GM12878 (cell line): ENCODE measurements at regions of chr2 and their contacts with region 1.

Region 1: GRCh38 chr2:227862227-227862740 is 9.1 kb upstream of the DAW1 start:
- DNase-seq: no peak
- ATAC-seq: peak; percentile 63
- H3K4me3 ChIP-seq: no peak overlapping the region
- H3K27ac ChIP-seq: no peak overlapping the region
- H3K4me1 ChIP-seq: no peaks in the 10 kb centered on the region
- H3K27me3 ChIP-seq: no peaks in the 10 kb centered on the region; a peak in 1 of 4 replicates
- CTCF ChIP-seq: peak; percentile 55 to 70 (median 66)
- EP300 ChIP-seq: no peak
- POLR2A ChIP-seq: no peak
- RAD21 ChIP-seq: peak; percentile 86

Region 2: DNA sequence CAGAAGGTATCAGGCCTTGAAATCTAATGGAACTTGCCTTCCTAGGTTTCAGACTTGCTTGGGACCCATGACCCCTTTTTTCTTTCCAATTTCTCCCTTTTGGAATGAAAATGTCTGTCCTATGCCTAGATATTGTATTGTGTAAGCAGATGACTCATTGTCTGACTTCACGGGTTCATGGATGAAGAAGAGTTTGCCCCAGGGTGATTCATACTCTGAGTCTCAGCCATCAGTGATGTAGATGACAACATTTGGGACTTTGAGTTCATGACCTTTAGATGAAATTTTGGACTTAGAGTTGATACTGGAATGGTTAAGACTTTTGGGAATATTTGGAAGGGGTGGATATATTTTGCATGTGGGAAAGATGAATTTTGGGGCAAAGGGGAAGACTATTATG is 206.8 kb before region 1 on chr2:
- CTCF ChIA-PET with region 1: interaction called, 69 read pairs
- POLR2A ChIA-PET with region 1: no interaction called
- RAD21 ChIA-PET with region 1: interaction called, 48 read pairs
- SMC1A ChIA-PET with region 1: interaction called, 45 read pairs
- in situ Hi-C with region 1: no loop called
- intact Hi-C with region 1: loop called (anchors 2 kb)
- DNase-seq: no peak
- ATAC-seq: peak; percentile 53
- H3K4me3 ChIP-seq: no peak overlapping the region
- H3K27ac ChIP-seq: no peak overlapping the region
- H3K4me1 ChIP-seq: no peaks in the 10 kb centered on the region
- H3K27me3 ChIP-seq: no peaks in the 10 kb centered on the region
- CTCF ChIP-seq: no peak
- EP300 ChIP-seq: no peak
- POLR2A ChIP-seq: no peak
- RAD21 ChIP-seq: no peak

Region 3: DNA sequence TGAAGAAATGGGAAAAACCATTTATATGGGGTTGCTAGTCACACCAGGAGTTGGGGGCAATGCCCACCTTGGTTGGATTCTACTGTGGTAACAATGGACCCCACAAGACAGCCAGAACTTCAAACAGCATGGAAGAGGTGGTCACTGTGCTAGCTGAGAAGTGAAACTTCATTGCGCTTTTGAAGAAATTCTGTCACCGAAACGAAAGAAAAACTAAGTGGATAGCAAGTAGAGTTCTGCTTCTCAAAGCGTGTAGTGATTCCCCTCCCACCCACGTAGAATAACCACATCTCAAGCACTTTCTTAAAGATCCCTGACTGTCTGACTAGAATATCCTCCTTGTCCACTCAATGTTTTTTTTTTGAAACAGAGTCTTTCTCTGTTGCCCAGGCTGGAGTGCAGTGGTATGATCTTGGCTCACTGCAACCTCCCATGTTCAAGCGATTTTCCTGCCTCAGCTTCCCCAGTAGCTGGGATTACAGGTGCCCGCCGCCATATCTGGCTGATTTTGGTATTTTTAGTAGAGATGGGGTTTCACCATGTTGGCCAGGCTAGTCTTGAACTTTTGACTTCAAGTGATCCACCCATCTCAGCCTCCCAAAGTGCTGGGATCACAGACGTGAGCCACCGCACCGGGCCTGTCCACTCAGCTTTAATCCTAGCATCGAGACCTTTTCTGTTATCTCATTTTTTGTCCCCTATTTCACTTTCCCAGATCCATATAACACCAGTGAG is 78.7 kb before region 1 on chr2:
- CTCF ChIA-PET with region 1: interaction called, 58 read pairs
- POLR2A ChIA-PET with region 1: interaction called, 8 read pairs
- RAD21 ChIA-PET with region 1: interaction called, 38 read pairs
- SMC1A ChIA-PET with region 1: interaction called, 109 read pairs
- in situ Hi-C with region 1: no loop called
- intact Hi-C with region 1: loop called (anchors 2 kb)
- DNase-seq: peak; percentile 81
- ATAC-seq: peak; percentile 91
- H3K4me3 ChIP-seq: peak overlapping the region; percentile 57
- H3K27ac ChIP-seq: peak overlapping the region; percentile 75
- H3K4me1 ChIP-seq: peaks cover 20% of the 10 kb centered on the region
- H3K27me3 ChIP-seq: no peaks in the 10 kb centered on the region
- CTCF ChIP-seq: no peak
- EP300 ChIP-seq: peak in 1 of 2 experiments; percentile 71; a peak in 1 of 4 replicates
- POLR2A ChIP-seq: 0 out of 2 replicates have a peak, but pooled peaks have one; percentile 39
- RAD21 ChIP-seq: no peak

Region 4: DNA sequence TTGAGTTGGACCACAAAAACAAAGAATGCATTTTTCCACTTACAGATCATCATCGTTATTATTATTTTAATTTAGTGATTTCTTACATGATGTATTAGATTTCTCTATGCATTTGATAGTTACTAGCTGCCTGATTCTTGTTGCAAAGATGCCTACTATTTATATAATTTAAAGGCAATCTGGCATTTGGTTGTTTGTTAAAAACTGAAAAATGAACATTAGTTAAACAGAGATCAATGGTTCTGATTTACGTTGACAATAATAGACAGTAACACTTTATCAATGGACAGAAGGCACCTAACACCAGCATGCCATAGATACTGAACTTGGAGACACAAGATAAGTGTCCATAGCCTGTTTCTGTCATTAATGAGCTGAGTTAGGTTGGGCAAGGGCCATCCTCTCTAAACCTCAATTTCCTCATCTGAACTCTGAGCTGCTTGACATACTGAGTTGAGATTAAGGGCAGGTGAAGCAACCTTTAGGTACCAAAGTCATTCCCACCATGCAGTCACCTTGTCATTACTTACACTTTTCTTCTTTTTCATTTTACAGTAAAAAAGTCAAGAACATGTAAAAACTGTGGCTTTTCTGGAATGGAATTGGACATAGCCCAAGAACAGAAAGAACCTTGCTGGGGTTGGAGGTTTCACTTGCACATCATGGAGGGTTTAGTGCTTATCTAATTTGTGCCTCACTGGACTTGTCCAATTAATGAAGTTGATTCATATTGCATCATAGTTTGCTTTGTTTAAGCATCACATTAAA is 45.6 kb before region 1 on chr2:
- CTCF ChIA-PET with region 1: interaction called, 65 read pairs
- POLR2A ChIA-PET with region 1: no interaction called
- RAD21 ChIA-PET with region 1: interaction called, 4 read pairs
- SMC1A ChIA-PET with region 1: interaction called, 24 read pairs
- in situ Hi-C with region 1: no loop called
- intact Hi-C with region 1: loop called (anchors 5 kb)
- DNase-seq: no peak
- ATAC-seq: peak; percentile 23; the same call in 2 of the 3 replicates
- H3K4me3 ChIP-seq: no peak overlapping the region
- H3K27ac ChIP-seq: no peak overlapping the region
- H3K4me1 ChIP-seq: no peaks in the 10 kb centered on the region
- H3K27me3 ChIP-seq: no peaks in the 10 kb centered on the region
- CTCF ChIP-seq: no peak
- EP300 ChIP-seq: no peak
- POLR2A ChIP-seq: no peak
- RAD21 ChIP-seq: no peak

Region 5: GRCh38 chr2:227848586-227848985 is 13.7 kb before region 1 on chr2:
- CTCF ChIA-PET with region 1: interaction called, 18 read pairs
- POLR2A ChIA-PET with region 1: no interaction called
- RAD21 ChIA-PET with region 1: interaction called, 7 read pairs
- SMC1A ChIA-PET with region 1: interaction called, 16 read pairs
- in situ Hi-C with region 1: no loop called
- intact Hi-C with region 1: no loop called
- DNase-seq: peak; percentile 80
- ATAC-seq: peak; percentile 95
- H3K4me3 ChIP-seq: peak overlapping the region; percentile 20; the same call in 1 of the 2 replicates
- H3K27ac ChIP-seq: peak overlapping the region; percentile 38
- H3K4me1 ChIP-seq: peaks cover 8% of the 10 kb centered on the region; the same call in 1 of the 2 replicates
- H3K27me3 ChIP-seq: no peaks in the 10 kb centered on the region
- CTCF ChIP-seq: no peak
- EP300 ChIP-seq: 0 out of 4 replicates have a peak, but pooled peaks of 1 of the 2 experiments have one; percentile 50
- POLR2A ChIP-seq: no peak
- RAD21 ChIP-seq: no peak

Region 6: DNA sequence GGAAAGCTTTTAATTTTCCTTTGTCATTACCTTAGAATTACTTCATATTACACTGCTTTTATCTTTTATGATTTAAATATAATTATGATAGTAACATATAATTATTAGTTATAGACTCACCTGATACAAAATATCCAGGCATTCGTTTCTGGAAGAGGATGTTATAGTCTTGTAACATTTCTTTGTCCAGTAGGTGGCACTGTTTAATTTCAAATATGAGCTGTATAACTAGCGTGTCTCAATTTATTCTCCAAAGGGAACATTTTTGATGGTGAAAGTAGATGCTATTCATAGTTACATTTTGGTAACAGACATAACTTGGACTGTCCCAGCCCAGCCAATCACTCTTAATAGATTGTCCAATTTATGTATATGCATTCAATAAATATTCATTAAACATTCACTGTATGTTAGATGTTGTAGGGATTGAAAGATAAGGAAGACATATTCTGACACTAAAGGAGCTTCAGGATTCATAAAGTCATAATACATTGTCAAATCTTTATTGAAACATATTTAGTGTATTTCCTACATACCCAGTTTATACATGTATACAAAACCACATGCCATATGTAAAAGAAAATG is 28.3 kb after region 1 on chr2:
- CTCF ChIA-PET with region 1: interaction called, 14 read pairs
- POLR2A ChIA-PET with region 1: no interaction called
- RAD21 ChIA-PET with region 1: interaction called, 6 read pairs
- SMC1A ChIA-PET with region 1: interaction called, 15 read pairs
- in situ Hi-C with region 1: no loop called
- intact Hi-C with region 1: no loop called
- DNase-seq: peak; percentile 4
- ATAC-seq: peak; percentile 88
- H3K4me3 ChIP-seq: no peak overlapping the region
- H3K27ac ChIP-seq: no peak overlapping the region
- H3K4me1 ChIP-seq: no peaks in the 10 kb centered on the region
- H3K27me3 ChIP-seq: 0 out of 4 replicates have a peak, but pooled peaks cover 0 to 2% of the 10 kb centered on the region in 2 experiments
- CTCF ChIP-seq: peak; percentile 33 to 58 (median 47); a peak in 5 of 6 replicates
- EP300 ChIP-seq: no peak
- POLR2A ChIP-seq: no peak
- RAD21 ChIP-seq: peak; percentile 61